AG04449 (cell line): ENCODE measurements at regions of chr11 and their contacts with region 1.

Region 1: GRCh38 chr11:66638177-66639065 is at the start of gene RBM4:
- DNase-seq: peak; percentile 99
- H3K4me3 ChIP-seq: peak within 1 kb of the TSS; percentile 86
- CTCF ChIP-seq: no peak

Region 2: GRCh38 chr11:66616379-66617154 is 21.9 kb before region 1 on chr11 and contains the start of gene RBM14:
- CTCF ChIA-PET with region 1: interaction called, 5 read pairs
- POLR2A ChIA-PET with region 1: interaction called, 37 read pairs
- DNase-seq: peak; percentile 93
- H3K4me3 ChIP-seq: peak within 1 kb of the TSS; percentile 94
- CTCF ChIP-seq: no peak

Region 3: GRCh38 chr11:66625041-66625751 is 13.2 kb before region 1 on chr11:
- CTCF ChIA-PET with region 1: interaction called, 5 read pairs
- POLR2A ChIA-PET with region 1: interaction called, 15 read pairs
- DNase-seq: no peak
- H3K4me3 ChIP-seq: no peak overlapping the region
- CTCF ChIP-seq: no peak